ENCODE measurements at regions of chr12 and their contacts with region 1.

Region 1: GRCh38 chr12:111405149-111405860 is 418 bp upstream of the SH2B3 start:
- DNase-seq: peak; percentile 97 to 98 (median 98)
- H3K4me3 ChIP-seq: peak overlapping the region; percentile 29 to 90
- H3K4me3 Mint-ChIP-seq: peak overlapping the region; percentile 86 to 95 (median 90)
- H3K27ac ChIP-seq: peak overlapping the region; percentile 97
- H3K27ac Mint-ChIP-seq: peak overlapping the region; percentile 92 to 98 (median 95)
- H3K4me1 ChIP-seq: peaks cover 61% of the 10 kb centered on the region
- H3K4me1 Mint-ChIP-seq: peaks cover 35 to 74% (median 52%) of the 10 kb centered on the region in 4 donors
- H3K27me3 ChIP-seq: no peaks in the 10 kb centered on the region
- H3K27me3 Mint-ChIP-seq: no peaks in the 10 kb centered on the region

Region 2: GRCh38 chr12:111377440-111377839 is 27.9 kb before region 1 on chr12:
- CTCF ChIA-PET with region 1: no interaction called
- POLR2A ChIA-PET with region 1: no interaction called
- intact Hi-C with region 1: no loop called
- DNase-seq: no peak
- H3K4me3 ChIP-seq: no peak overlapping the region
- H3K4me3 Mint-ChIP-seq: no peak overlapping the region
- H3K27ac ChIP-seq: no peak overlapping the region
- H3K27ac Mint-ChIP-seq: no peak overlapping the region
- H3K4me1 ChIP-seq: no peaks in the 10 kb centered on the region
- H3K4me1 Mint-ChIP-seq: no peaks in the 10 kb centered on the region
- H3K27me3 ChIP-seq: no peaks in the 10 kb centered on the region
- H3K27me3 Mint-ChIP-seq: peaks cover 1 to 9% of the 10 kb centered on the region in 2 donors

Region 3: DNA sequence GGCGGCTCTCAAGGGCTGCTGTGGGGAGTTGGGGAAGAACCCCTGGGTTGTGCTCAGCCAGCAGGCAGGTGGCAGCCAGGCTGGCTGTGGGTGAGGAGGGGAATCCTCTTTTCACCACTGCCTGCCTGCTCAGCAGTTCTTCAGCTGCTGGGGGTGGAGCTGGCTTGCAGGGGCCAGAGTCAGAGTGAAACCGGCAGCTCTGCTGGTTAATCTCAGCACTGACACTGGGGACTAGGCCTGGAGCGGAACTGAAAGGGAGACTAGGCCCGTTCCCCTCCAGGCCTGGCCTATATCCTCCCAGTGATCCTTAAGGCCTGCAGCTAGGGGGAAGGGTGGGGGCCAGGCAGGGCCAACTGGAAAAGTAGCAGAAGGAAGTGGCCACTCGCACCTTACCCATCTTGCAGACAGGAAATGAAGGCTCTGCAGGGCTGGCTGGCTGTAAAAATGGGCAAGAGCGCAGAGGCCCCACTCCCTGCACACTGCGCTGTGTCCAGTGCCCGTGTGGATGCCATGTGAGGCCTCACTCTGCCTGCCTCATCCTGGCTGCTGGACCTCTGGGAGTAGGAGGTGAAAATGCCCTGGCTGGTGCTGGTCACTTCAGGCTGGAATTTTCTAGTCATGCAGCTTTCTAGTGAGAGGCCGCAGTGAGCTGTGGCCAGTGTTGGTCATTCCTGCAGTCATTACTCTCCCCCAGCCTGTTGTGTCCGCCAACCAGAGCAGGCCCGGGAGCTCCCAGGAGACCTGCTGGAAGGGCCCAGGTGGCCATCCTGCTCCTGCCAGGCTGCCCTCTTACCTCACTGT is 39.8 kb after region 1 on chr12:
- CTCF ChIA-PET with region 1: interaction called, 1,282 read pairs
- POLR2A ChIA-PET with region 1: interaction called, 683 read pairs
- intact Hi-C with region 1: loop called (anchors 1 kb)
- DNase-seq: peak; percentile 82 to 94 (median 86)
- H3K4me3 ChIP-seq: peak overlapping the region; percentile 12 to 35
- H3K4me3 Mint-ChIP-seq: peak overlapping the region; percentile 64 to 86 (median 77)
- H3K27ac ChIP-seq: peak overlapping the region; percentile 71
- H3K27ac Mint-ChIP-seq: peak overlapping the region; percentile 87 to 100 (median 97)
- H3K4me1 ChIP-seq: peaks cover 81% of the 10 kb centered on the region
- H3K4me1 Mint-ChIP-seq: peaks cover 46 to 92% (median 77%) of the 10 kb centered on the region in 4 donors
- H3K27me3 ChIP-seq: no peaks in the 10 kb centered on the region
- H3K27me3 Mint-ChIP-seq: no peaks in the 10 kb centered on the region

Region 4: GRCh38 chr12:111685744-111686517 is 280.6 kb after region 1 on chr12 and contains the starts of genes ACAD10 and BRAP:
- CTCF ChIA-PET with region 1: no interaction called
- POLR2A ChIA-PET with region 1: no interaction called
- intact Hi-C with region 1: loop called (anchors 2 kb)
- DNase-seq: peak; percentile 89 to 98 (median 94)
- H3K4me3 ChIP-seq: peak within 1 kb of the TSS; percentile 68 to 91
- H3K4me3 Mint-ChIP-seq: peak within 1 kb of the TSS; percentile 90 to 99 (median 96)
- H3K27ac ChIP-seq: peak within 1 kb of the TSS; percentile 83
- H3K27ac Mint-ChIP-seq: peak within 1 kb of the TSS; percentile 81 to 98 (median 97)
- H3K4me1 ChIP-seq: peaks cover 28% of the 10 kb centered on the region
- H3K4me1 Mint-ChIP-seq: peaks cover 17 to 64% (median 41%) of the 10 kb centered on the region in 4 donors
- H3K27me3 ChIP-seq: no peaks in the 10 kb centered on the region
- H3K27me3 Mint-ChIP-seq: no peaks in the 10 kb centered on the region
- total RNA-seq, gene ACAD10: 52.2 to 58.3 TPM
- total RNA-seq, gene BRAP: 25.9 to 27.5 TPM